GM12878 (cell line): ENCODE measurements at regions of chr6 and their contacts with region 1.

Region 1: GRCh38 chr6:165729307-165729936 is 66.4 kb upstream of the PDE10A start:
- DNase-seq: no peak
- ATAC-seq: peak; percentile 67
- H3K4me3 ChIP-seq: no peak overlapping the region
- H3K27ac ChIP-seq: no peak overlapping the region
- H3K4me1 ChIP-seq: no peaks in the 10 kb centered on the region
- H3K27me3 ChIP-seq: no peaks in the 10 kb centered on the region
- CTCF ChIP-seq: peak; percentile 63 to 67 (median 66)
- EP300 ChIP-seq: no peak
- POLR2A ChIP-seq: no peak
- RAD21 ChIP-seq: peak; percentile 45

Region 2: GRCh38 chr6:165744555-165745228 is 15.3 kb after region 1 on chr6:
- CTCF ChIA-PET with region 1: interaction called, 9 read pairs
- POLR2A ChIA-PET with region 1: no interaction called
- RAD21 ChIA-PET with region 1: interaction called, 5 read pairs
- SMC1A ChIA-PET with region 1: interaction called, 12 read pairs
- in situ Hi-C with region 1: no loop called
- intact Hi-C with region 1: no loop called
- DNase-seq: peak; percentile 23
- ATAC-seq: peak; percentile 83
- H3K4me3 ChIP-seq: no peak overlapping the region
- H3K27ac ChIP-seq: no peak overlapping the region
- H3K4me1 ChIP-seq: no peaks in the 10 kb centered on the region
- H3K27me3 ChIP-seq: no peaks in the 10 kb centered on the region
- CTCF ChIP-seq: no peak
- EP300 ChIP-seq: no peak; a peak in 1 of 4 replicates
- POLR2A ChIP-seq: no peak
- RAD21 ChIP-seq: no peak

Region 3: DNA sequence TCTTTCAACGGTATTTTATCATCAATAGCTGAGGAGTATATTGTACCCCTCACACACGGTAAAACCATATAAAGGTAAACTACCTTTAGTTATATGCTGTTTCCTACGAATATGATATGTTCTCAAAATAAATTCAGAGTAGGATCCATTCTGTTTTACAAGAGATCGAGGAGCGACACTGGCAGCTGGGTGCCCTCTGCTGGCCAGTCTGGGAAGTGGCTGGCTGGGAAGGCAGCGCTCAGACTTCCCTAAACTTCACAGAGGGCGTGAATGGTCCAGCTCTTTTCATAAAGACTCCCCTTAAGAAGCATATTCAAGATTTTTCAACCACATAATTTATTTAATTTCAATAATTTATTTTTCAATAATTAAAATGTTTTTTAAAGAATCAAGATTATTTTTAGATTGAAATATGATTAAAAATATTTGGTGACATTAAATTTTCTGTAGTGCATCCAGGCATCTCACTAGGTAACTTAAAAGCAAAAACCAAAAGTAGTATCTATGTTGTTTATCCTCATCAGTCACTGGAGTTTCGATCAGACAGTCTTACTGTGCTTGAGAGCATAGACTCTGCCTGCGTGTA is 121.1 kb after region 1 on chr6:
- CTCF ChIA-PET with region 1: interaction called, 52 read pairs
- POLR2A ChIA-PET with region 1: no interaction called
- RAD21 ChIA-PET with region 1: interaction called, 7 read pairs
- SMC1A ChIA-PET with region 1: interaction called, 5 read pairs
- in situ Hi-C with region 1: loop called (anchors 5 kb)
- intact Hi-C with region 1: loop called (anchors 1 kb)
- DNase-seq: no peak
- ATAC-seq: peak; percentile 92
- H3K4me3 ChIP-seq: no peak overlapping the region
- H3K27ac ChIP-seq: no peak overlapping the region
- H3K4me1 ChIP-seq: no peaks in the 10 kb centered on the region
- H3K27me3 ChIP-seq: no peaks in the 10 kb centered on the region; a peak in 2 of 4 replicates
- CTCF ChIP-seq: peak; percentile 94 to 99 (median 97); a peak in 5 of 6 replicates
- EP300 ChIP-seq: no peak
- POLR2A ChIP-seq: no peak
- RAD21 ChIP-seq: peak; percentile 77